CD8-positive, alpha-beta T cell (primary cell): ENCODE measurements at regions of chr15 and their contacts with region 1.

Region 1: DNA sequence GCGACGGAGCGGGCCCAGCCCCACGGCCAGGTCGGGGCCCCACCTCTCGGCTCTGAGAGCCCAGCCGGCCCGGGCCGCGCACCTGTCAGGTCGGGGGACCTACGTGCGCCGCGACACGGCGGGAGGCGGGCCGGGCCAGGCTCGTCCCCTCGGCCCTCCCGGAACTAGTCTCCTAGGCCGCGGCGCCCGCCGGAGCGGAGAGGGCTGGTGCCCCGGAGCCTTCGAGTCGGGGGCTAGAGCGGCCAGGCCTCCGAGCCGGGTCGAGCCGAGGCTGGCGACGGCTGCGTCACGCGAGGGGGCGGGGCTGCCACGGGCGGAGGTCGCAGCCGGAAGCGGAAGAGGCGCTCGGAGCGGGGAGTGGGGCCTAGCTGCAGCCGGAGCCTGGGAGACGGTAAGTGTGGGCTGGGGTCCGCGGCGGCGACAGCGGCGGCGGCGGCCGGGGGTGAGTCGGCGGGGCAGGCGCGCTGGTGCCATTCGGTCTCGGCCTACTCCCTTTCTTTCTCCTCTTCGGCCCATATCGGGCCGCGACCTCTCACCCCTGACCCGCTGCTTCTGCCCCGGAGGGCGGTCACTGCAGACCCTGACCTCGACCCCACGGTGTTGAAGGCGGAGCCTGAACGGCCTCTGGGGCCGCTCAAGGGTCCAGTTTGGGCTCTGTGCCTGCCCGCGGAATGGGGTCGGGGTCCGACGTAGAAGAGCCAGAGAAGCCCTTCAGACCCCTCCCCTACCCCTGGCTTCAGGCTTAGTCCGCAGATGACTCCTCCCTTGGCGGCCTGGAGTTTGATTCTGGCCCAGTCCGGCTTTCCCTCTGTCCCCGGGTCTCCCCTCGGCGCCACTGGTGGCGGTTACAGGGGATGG is at the start of gene CLK3:
- DNase-seq: peak; percentile 89 to 99 (median 96)
- ATAC-seq: peak; percentile 67
- H3K4me3 ChIP-seq: peak within 1 kb of the TSS; percentile 88 to 95
- H3K4me3 Mint-ChIP-seq: peak within 1 kb of the TSS; percentile 91
- H3K27ac ChIP-seq: peak within 1 kb of the TSS; percentile 97 to 99
- H3K27ac Mint-ChIP-seq: peak within 1 kb of the TSS; percentile 97
- H3K4me1 ChIP-seq: peaks cover 25% of the 10 kb centered on the region
- H3K4me1 Mint-ChIP-seq: peaks cover 38% of the 10 kb centered on the region
- H3K27me3 ChIP-seq: no peaks in the 10 kb centered on the region
- H3K27me3 Mint-ChIP-seq: no peaks in the 10 kb centered on the region
- CTCF ChIP-seq: no peak
- total RNA-seq, gene CLK3: 246 to 262 TPM

Region 2: GRCh38 chr15:74373731-74374647 is 241.7 kb before region 1 on chr15:
- CTCF ChIA-PET with region 1: interaction called, 3 read pairs
- POLR2A ChIA-PET with region 1: interaction called, 3 read pairs
- intact Hi-C with region 1: loop called in 1 of 2 experiments (anchors 5 kb)
- DNase-seq: peak; percentile 92 to 97 (median 95)
- ATAC-seq: peak; percentile 96
- H3K4me3 ChIP-seq: peak overlapping the region; percentile 89 to 96
- H3K4me3 Mint-ChIP-seq: peak overlapping the region; percentile 82
- H3K27ac ChIP-seq: peak overlapping the region; percentile 45 to 62
- H3K27ac Mint-ChIP-seq: no peak overlapping the region
- H3K4me1 ChIP-seq: peaks cover 15% of the 10 kb centered on the region
- H3K4me1 Mint-ChIP-seq: peaks cover 16% of the 10 kb centered on the region
- H3K27me3 ChIP-seq: no peaks in the 10 kb centered on the region
- H3K27me3 Mint-ChIP-seq: peaks cover 8% of the 10 kb centered on the region
- CTCF ChIP-seq: peak; percentile 86

Region 3: GRCh38 chr15:74396445-74397238 is 219.1 kb before region 1 on chr15:
- CTCF ChIA-PET with region 1: no interaction called
- POLR2A ChIA-PET with region 1: no interaction called
- intact Hi-C with region 1: no loop called
- DNase-seq: peak in 5 of 9 experiments; percentile 31 to 74 (median 49)
- ATAC-seq: peak; percentile 39
- H3K4me3 ChIP-seq: no peak overlapping the region
- H3K4me3 Mint-ChIP-seq: no peak overlapping the region
- H3K27ac ChIP-seq: no peak overlapping the region
- H3K27ac Mint-ChIP-seq: peak overlapping the region; percentile 69
- H3K4me1 ChIP-seq: peaks cover 54% of the 10 kb centered on the region
- H3K4me1 Mint-ChIP-seq: peaks cover 58% of the 10 kb centered on the region
- H3K27me3 ChIP-seq: no peaks in the 10 kb centered on the region
- H3K27me3 Mint-ChIP-seq: no peaks in the 10 kb centered on the region
- CTCF ChIP-seq: no peak

Region 4: GRCh38 chr15:74598126-74598842 is 17.5 kb before region 1 on chr15:
- CTCF ChIA-PET with region 1: interaction called, 3 read pairs
- POLR2A ChIA-PET with region 1: interaction called, 11 read pairs
- intact Hi-C with region 1: loop called (anchors 1 kb)
- DNase-seq: peak; percentile 71 to 91 (median 87)
- ATAC-seq: peak; percentile 98
- H3K4me3 ChIP-seq: peak overlapping the region; percentile 86 to 87
- H3K4me3 Mint-ChIP-seq: peak overlapping the region; percentile 99
- H3K27ac ChIP-seq: peak overlapping the region; percentile 75 to 78
- H3K27ac Mint-ChIP-seq: peak overlapping the region; percentile 97
- H3K4me1 ChIP-seq: peaks cover 11% of the 10 kb centered on the region
- H3K4me1 Mint-ChIP-seq: peaks cover 23% of the 10 kb centered on the region
- H3K27me3 ChIP-seq: no peaks in the 10 kb centered on the region
- H3K27me3 Mint-ChIP-seq: no peaks in the 10 kb centered on the region
- CTCF ChIP-seq: no peak

Region 5: DNA sequence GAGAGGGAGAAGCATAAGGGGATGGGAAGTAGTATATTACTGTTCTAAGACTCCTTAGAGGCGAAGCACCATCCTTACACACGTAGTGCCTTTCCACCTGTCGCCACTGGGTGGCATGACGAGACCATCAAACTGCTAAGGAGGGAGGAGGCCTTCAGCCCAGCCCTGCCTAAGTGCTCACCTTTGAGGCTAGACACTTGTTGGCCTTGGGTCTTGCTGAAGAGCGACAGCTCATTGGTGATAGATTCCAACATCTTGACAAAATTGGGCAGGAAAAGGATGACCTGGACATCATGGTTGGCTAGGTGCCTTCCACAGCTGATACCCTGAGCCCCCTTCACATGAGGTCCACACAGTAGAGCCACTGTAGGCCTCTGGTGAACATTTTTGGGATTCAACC is 19.5 kb after region 1 on chr15:
- CTCF ChIA-PET with region 1: interaction called, 295 read pairs
- POLR2A ChIA-PET with region 1: interaction called, 12 read pairs
- intact Hi-C with region 1: no loop called
- DNase-seq: peak; percentile 53 to 84 (median 73)
- ATAC-seq: peak; percentile 95
- H3K4me3 ChIP-seq: no peak overlapping the region
- H3K4me3 Mint-ChIP-seq: no peak overlapping the region
- H3K27ac ChIP-seq: peak overlapping the region in 1 of 2 experiments; percentile 36
- H3K27ac Mint-ChIP-seq: no peak overlapping the region
- H3K4me1 ChIP-seq: peaks cover 6% of the 10 kb centered on the region
- H3K4me1 Mint-ChIP-seq: peaks cover 5% of the 10 kb centered on the region
- H3K27me3 ChIP-seq: no peaks in the 10 kb centered on the region
- H3K27me3 Mint-ChIP-seq: no peaks in the 10 kb centered on the region
- CTCF ChIP-seq: peak; percentile 82

Region 6: DNA sequence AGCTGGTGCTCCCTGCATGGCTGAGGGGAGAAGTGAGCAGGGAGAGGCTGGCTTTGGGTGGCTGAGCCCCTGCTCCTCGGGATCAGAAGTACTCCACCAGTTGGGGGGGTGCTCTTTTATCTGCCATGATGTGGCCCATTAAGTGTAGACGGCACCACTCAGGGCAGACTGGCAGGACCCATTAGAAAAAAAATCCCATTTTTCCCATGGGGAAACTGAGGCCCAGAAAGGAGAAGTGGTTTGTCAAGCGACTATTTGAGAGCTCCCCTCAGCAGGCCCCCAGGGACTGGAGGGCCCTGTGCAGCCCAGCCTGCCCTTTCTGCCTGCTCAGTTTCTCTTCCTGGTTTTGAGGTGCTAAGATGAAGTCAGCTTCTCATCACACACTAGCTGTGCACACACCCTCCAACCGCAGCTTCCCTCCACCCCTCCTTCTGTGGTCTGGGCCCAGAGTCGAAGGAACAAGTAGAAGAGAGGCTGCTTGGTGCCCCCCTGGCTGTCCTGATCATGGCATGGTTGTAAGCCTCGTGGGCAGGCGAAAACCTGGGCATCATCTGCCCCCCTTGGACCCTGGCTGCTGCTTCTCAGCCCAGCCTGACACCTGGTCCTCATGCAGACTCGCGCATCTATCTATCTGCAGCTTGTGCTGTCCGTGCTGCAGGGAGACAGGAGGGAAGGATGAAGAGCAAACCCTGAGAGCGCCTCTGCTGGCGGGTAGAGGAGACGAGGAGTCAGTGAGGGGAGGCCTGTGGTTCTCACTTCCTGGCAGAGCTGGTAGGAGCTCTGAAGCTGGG is 171.7 kb after region 1 on chr15:
- CTCF ChIA-PET with region 1: interaction called, 9 read pairs
- POLR2A ChIA-PET with region 1: interaction called, 16 read pairs
- intact Hi-C with region 1: loop called (anchors 1 to 5 kb)
- DNase-seq: peak; percentile 81 to 97 (median 92)
- ATAC-seq: peak; percentile 71
- H3K4me3 ChIP-seq: peak overlapping the region; percentile 83 to 98
- H3K4me3 Mint-ChIP-seq: peak overlapping the region; percentile 83
- H3K27ac ChIP-seq: peak overlapping the region; percentile 53 to 90
- H3K27ac Mint-ChIP-seq: peak overlapping the region; percentile 92
- H3K4me1 ChIP-seq: peaks cover 76% of the 10 kb centered on the region
- H3K4me1 Mint-ChIP-seq: peaks cover 71% of the 10 kb centered on the region
- H3K27me3 ChIP-seq: no peaks in the 10 kb centered on the region
- H3K27me3 Mint-ChIP-seq: no peaks in the 10 kb centered on the region
- CTCF ChIP-seq: peak; percentile 62

Region 7: DNA sequence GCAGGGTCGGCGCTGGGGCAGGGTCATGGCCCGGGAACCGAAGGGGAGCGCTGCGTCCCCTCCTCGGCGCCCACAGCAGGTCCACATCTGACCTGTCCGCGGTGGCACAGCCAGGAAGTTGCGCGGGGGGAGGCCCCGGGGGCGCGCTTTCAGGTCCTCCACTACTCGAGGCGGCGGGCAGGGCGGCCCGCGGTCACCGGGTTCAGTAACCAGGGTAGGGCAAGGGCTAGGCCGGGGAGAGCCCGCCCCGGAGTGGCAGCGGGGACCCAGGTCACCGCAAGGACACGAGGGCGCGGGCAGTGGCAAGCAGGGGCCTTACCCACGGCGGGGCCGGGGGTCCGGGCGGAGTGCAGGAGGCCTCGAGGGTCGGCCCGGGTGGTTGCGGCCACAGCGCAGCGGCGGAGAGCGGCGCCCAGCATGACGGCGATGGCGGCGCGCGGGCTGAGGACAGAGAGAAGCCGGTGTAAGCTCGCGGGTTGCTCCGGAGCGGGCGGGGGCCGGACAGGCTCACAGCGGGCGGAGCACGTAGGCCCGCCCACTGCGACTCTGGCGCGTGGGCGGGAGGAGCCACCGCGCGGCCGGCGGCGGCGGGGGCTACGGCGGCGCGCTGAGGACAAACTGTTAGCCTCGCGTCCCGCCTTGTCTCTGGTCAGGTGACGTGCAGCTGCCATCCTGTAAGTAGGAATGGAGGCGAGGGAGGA is 322.0 kb after region 1 on chr15 and contains the start of gene COX5A:
- CTCF ChIA-PET with region 1: no interaction called
- POLR2A ChIA-PET with region 1: no interaction called
- intact Hi-C with region 1: loop called (anchors 2 to 5 kb)
- DNase-seq: peak; percentile 83 to 97 (median 88)
- ATAC-seq: peak; percentile 96
- H3K4me3 ChIP-seq: peak within 1 kb of the TSS; percentile 73 to 86
- H3K4me3 Mint-ChIP-seq: peak within 1 kb of the TSS; percentile 88
- H3K27ac ChIP-seq: peak within 1 kb of the TSS; percentile 72 to 73
- H3K27ac Mint-ChIP-seq: peak within 1 kb of the TSS; percentile 92
- H3K4me1 ChIP-seq: peaks cover 14% of the 10 kb centered on the region
- H3K4me1 Mint-ChIP-seq: peaks cover 31% of the 10 kb centered on the region
- H3K27me3 ChIP-seq: no peaks in the 10 kb centered on the region
- H3K27me3 Mint-ChIP-seq: no peaks in the 10 kb centered on the region
- CTCF ChIP-seq: no peak
- total RNA-seq, gene COX5A: 40.0 to 42.6 TPM